Panc1 (cell line): ENCODE measurements at regions of chr7 and their contacts with region 1.

Region 1: DNA sequence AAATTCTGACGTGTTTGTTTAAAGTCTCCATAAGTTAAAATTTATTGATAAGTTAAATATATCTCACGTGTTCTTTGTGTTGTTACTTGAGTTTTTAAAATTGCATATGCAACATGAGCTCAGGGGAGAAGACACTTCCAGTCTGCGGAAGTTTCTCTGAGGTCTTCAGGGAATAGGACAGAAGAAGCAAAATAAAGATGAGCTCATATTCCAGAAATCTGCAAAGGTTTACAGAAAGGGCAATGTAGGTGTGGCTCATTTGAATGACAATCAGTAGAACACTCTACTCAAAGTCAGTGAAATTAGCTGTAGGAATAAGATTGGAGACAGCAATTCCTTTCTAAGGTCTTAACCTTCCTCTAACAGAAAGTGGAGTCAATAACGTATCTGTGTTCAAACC is 53.7 kb downstream of the CACNA2D1 start:
- DNase-seq: no peak
- ATAC-seq: no peak
- H3K4me3 ChIP-seq: no peak overlapping the region
- H3K27ac ChIP-seq: no peak overlapping the region
- H3K4me1 ChIP-seq: no peaks in the 10 kb centered on the region
- H3K27me3 ChIP-seq: peaks cover 2% of the 10 kb centered on the region; the same call in 1 of the 2 replicates
- CTCF ChIP-seq: no peak

Region 2: DNA sequence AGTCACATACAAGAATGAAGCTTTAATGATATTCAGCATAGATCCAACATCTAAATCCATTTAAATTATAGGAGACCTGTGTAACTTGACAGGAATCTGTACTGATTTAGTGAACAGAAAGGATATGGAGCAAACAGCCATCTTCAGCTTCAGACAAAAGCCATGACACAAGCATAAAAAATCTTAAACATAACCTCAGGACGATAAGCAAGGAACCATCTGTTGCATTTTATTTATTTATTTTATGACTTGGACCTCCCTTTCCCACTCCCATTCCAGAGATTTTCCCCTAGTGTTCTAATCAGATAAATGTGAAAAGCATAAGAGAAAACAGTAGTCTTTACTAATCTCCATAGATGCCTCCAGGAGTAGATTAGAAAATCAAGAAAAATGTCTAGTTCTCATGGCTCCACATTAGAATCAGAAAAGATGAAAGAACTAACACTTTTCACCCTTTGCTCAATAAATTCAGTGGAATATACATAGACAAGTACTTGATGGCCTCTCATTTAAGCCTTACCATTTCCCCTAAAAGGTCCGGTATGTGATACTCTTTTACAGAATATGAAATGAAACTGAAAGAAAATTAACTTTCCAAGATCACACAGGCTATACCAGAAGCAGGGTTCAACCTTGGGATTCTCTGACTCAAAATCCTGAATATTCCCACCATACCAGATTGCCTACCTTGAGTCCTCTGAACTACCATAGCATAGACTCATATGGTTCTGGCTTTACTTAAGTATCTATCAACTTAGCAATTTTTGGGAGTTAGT is 38.5 kb after region 1 on chr7:
- CTCF ChIA-PET with region 1: no interaction called
- POLR2A ChIA-PET with region 1: no interaction called
- in situ Hi-C with region 1: no loop called
- intact Hi-C with region 1: no loop called
- DNase-seq: no peak
- ATAC-seq: no peak
- H3K4me3 ChIP-seq: no peak overlapping the region
- H3K27ac ChIP-seq: no peak overlapping the region
- H3K4me1 ChIP-seq: no peaks in the 10 kb centered on the region
- H3K27me3 ChIP-seq: no peaks in the 10 kb centered on the region
- CTCF ChIP-seq: no peak

Region 3: DNA sequence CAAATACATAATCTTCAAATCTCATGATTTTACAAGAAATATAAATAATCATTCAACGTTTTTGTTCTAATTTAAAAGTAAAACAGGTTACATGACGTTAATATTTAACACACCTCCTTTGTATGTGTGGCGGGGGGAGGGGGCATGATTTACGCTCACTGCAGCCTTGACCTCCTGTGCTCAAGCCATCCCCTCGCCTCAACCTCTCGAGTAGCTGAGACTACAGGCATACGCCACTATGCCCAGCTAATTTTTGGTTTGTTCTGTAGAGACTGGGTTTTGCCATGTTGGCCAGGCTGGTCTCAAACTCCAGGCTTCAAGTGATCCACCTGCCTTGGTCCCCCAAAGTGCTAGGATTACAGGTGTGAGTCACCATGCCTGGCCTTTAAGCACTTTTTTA is 60.9 kb after region 1 on chr7:
- CTCF ChIA-PET with region 1: no interaction called
- POLR2A ChIA-PET with region 1: interaction called, 12 read pairs
- in situ Hi-C with region 1: no loop called
- intact Hi-C with region 1: no loop called
- DNase-seq: no peak
- ATAC-seq: no peak
- H3K4me3 ChIP-seq: no peak overlapping the region
- H3K27ac ChIP-seq: no peak overlapping the region
- H3K4me1 ChIP-seq: no peaks in the 10 kb centered on the region; the same call in 1 of the 2 replicates
- H3K27me3 ChIP-seq: peaks cover 7% of the 10 kb centered on the region
- CTCF ChIP-seq: no peak